Left ventricle myocardium inferior (tissue), 1 donor: ENCODE measurements at regions of chr2 and their contacts with region 1.

Region 1: DNA sequence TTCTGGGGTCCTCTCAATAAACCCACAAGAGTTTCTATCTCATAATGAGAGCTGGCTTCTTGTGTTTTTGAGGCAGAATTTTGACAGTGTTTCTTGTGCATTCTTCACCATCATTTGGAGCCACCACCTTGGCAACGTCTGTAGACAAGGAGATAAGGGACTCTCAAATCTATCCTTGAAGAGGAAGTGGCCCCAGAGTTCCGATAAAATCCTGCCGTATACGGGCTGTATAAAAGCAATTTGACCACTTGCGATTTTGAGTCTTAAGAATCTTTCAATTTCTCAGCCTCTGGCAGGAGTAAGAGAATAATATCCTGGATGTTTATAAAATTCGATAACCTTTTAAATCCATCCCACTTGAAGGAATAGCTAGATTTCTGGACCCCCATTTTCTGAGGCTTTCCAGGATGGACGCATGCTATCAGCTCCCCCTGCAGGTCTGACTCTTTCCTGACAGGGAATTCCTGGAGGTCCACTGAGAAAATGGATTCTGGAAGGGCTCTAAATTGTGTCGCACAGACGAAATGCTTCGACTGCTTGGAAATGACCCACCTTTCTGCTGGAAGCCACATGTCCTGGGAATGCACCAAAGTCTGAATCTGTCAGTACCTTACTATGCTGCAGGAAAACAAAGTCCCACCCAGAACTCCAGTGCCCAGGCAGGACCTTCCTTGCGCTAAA is 54.1 kb downstream of the E2F6 start:
- DNase-seq: no peak
- H3K4me3 ChIP-seq: peak overlapping the region; percentile 60
- H3K27ac ChIP-seq: no peak overlapping the region
- H3K4me1 ChIP-seq: peaks cover 21% of the 10 kb centered on the region
- H3K27me3 ChIP-seq: no peaks in the 10 kb centered on the region
- CTCF ChIP-seq: peak; percentile 90

Region 2: DNA sequence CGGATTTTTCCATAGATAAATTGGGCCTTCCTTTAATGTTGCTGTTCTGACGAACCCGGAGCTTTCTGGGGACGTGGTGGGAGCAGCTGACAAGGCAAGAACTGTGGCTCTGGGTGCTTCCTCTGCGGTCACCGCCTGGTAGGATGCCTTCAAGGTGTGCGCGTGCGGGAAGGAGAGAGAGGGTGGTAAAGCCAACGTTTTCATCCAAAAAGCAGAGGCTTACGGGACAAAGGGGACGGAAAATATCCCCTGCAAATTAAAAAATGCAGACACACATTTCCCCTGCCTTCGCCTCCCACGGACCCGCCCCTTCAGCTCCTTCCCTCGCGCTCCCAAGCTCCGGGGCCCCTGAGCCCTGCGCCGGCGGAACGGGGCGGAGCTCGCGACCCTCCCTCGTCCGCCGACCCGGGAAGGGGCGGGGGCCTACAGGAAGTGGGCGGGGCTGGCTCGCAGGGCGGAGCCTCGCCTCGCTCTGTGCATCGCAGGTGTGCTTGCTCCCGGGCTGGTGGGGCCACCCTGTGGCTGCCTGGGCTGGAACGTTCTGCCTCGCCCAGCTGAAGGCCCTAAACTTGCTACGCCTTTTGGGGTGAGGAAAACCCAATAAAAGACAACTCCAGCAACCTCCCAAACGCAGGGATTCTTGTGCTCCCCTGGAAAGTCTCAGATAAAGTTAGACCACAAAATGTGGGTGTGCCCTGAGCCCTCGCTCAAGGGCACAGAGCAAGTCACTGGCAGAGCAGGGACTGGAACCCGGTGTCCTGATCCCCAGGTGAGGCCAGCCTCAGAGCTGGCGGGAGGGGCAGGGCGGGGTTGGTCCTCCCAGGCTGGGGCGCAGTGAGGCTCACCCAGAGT is 282.1 kb before region 1 on chr2:
- intact Hi-C with region 1: loop called (anchors 10 kb)
- DNase-seq: peak; percentile 41
- H3K4me3 ChIP-seq: peak overlapping the region; percentile 59
- H3K27ac ChIP-seq: peak overlapping the region; percentile 54
- H3K4me1 ChIP-seq: peaks cover 37% of the 10 kb centered on the region
- H3K27me3 ChIP-seq: peaks cover 21% of the 10 kb centered on the region
- CTCF ChIP-seq: peak; percentile 39

Region 3: GRCh38 chr2:11234309-11234708 is 177.6 kb before region 1 on chr2:
- intact Hi-C with region 1: loop called (anchors 2 kb)
- DNase-seq: no peak
- H3K4me3 ChIP-seq: no peak overlapping the region
- H3K27ac ChIP-seq: no peak overlapping the region
- H3K4me1 ChIP-seq: peaks cover 29% of the 10 kb centered on the region
- H3K27me3 ChIP-seq: no peaks in the 10 kb centered on the region
- CTCF ChIP-seq: peak; percentile 70

Region 4: GRCh38 chr2:11534744-11535484 is 123.0 kb after region 1 on chr2:
- intact Hi-C with region 1: no loop called
- DNase-seq: no peak
- H3K4me3 ChIP-seq: no peak overlapping the region
- H3K27ac ChIP-seq: no peak overlapping the region
- H3K4me1 ChIP-seq: peaks cover 18% of the 10 kb centered on the region
- H3K27me3 ChIP-seq: peaks cover 4% of the 10 kb centered on the region
- CTCF ChIP-seq: no peak